Activated CD8-positive, alpha-beta T cell treated with anti-CD3 and anti-CD28 coated beads, Interleukin-2, amount 10 ng/mL, durations not matched to agents 7 days and 5 days (primary cell): ENCODE measurements at regions of chr14 and their contacts with region 1.

Region 1: GRCh38 chr14:22986508-22987054 is 4.2 kb upstream of the AJUBA start:
- DNase-seq: peak; percentile 93
- ATAC-seq: peak; percentile 50
- H3K4me3 Mint-ChIP-seq: no peak overlapping the region
- H3K27ac Mint-ChIP-seq: no peak overlapping the region
- H3K4me1 Mint-ChIP-seq: no peaks in the 10 kb centered on the region
- H3K27me3 Mint-ChIP-seq: no peaks in the 10 kb centered on the region

Region 2: DNA sequence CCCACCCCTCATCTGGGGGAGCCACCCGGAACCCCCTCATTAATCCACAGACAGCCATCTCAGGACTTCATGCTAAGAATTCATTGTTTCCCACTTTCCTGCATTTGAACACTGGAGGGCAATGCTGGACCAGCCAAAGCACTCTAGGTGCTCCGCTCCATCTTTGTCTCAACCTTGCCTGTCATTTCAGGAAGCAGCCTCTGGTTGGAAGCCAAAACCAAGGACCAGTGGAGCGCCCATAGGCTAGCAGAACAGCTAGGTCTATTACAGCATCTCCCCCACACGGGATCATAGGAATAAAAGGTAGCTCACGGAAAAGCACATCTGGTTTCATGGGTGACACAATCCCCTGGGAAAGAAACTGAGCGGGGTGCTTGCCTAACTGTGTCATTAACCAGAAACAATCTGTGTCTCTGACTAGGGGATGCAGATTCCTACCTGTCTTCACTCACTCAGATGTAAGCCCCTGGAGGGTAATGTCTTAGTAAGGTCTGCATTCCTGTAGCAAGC is 594.6 kb before region 1 on chr14:
- CTCF ChIA-PET with region 1: no interaction called
- POLR2A ChIA-PET with region 1: no interaction called
- DNase-seq: no peak
- ATAC-seq: no peak
- H3K4me3 Mint-ChIP-seq: no peak overlapping the region
- H3K27ac Mint-ChIP-seq: no peak overlapping the region
- H3K4me1 Mint-ChIP-seq: no peaks in the 10 kb centered on the region
- H3K27me3 Mint-ChIP-seq: no peaks in the 10 kb centered on the region

Region 3: GRCh38 chr14:22766456-22767322 is 219.9 kb before region 1 on chr14 and contains the start of gene OXA1L:
- CTCF ChIA-PET with region 1: no interaction called
- POLR2A ChIA-PET with region 1: no interaction called
- DNase-seq: peak; percentile 98
- ATAC-seq: peak; percentile 94
- H3K4me3 Mint-ChIP-seq: peak within 1 kb of the TSS; percentile 93
- H3K27ac Mint-ChIP-seq: peak within 1 kb of the TSS; percentile 97
- H3K4me1 Mint-ChIP-seq: peaks cover 33% of the 10 kb centered on the region
- H3K27me3 Mint-ChIP-seq: no peaks in the 10 kb centered on the region
- total RNA-seq, gene OXA1L: 104 to 107 TPM

Region 4: DNA sequence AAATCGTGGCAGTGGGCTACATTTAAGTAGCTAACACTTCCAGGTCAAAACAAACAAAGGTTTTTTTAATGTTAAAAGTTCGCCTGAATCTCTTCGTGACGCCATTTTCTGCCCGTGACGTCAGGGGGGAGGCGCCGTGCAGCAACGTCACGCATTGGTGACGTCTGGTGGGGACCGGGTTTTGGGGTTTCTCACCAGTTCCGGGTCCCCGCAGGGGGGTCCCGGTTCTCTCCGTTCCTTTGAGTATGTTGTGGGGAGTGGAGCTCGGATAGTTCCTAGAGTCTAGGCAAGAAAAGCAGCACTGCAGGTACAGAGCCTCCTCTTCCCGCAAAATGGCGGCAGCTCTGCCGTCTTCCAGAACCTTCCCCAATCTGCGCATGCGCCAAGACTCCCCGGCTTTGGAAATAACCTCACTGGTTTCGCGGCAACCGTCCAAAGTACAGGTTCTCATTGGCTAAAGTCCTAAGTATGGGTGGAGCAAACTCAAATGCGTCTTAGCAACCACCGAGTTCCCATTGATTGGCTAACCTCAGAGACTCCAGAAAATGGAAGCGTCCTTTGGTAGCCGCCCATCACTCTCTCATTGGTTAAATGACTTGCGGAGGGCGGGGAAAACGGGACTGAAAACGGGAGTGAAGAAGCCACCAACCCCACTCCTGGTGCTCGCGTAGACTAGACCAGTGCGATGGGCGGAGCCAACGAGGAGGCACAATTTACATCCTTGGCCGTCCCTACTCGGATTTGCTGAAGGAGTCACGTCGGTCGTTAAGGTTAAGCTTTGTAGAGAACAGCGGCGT is 67.6 kb before region 1 on chr14 and contains the start of gene RBM23:
- CTCF ChIA-PET with region 1: interaction called, 15 read pairs
- POLR2A ChIA-PET with region 1: no interaction called
- DNase-seq: peak; percentile 100
- ATAC-seq: peak; percentile 96
- H3K4me3 Mint-ChIP-seq: peak within 1 kb of the TSS; percentile 88
- H3K27ac Mint-ChIP-seq: peak within 1 kb of the TSS; percentile 98
- H3K4me1 Mint-ChIP-seq: peaks cover 35% of the 10 kb centered on the region
- H3K27me3 Mint-ChIP-seq: no peaks in the 10 kb centered on the region
- total RNA-seq, gene RBM23: 77.1 to 81.2 TPM

Region 5: DNA sequence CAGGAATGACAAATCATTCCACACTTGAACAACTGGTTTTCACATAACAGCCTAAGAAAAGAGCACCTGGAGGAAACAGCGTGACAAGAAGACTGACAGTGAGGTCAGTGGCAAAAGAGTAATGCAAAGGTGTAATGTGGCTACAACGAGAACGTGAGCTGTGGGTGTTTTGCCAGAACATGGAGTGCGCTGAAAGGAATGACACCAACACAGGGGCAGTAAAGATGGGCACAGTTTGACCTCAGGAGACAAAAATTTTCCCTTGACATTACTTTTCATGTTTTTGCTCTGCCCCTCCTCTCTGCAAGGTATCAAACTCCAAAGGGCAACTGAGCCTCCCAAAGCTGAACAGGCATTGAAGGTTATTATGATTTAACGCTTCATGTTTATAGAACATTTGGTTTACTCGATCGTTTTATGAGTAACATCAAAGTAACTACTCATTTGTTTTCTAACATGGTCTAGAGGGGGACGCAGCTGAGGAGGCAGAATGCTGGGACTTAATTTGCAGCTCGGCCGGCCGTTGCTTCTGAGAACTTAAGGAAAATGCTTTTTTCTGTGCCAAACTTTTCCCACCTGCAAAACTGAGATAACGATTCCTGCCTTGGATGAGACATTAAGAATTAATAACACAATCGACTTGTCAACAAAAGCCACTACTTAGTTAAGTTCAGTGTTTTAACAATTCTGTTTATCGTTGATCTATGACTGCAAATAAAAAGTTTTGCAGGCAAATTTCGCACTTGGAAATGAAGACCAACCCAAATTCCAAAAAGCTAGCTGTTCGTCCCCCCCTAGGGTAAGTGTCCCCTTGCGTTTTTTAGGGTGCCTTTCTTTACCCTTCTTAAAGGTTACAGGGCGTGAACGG is 30.6 kb before region 1 on chr14:
- CTCF ChIA-PET with region 1: interaction called, 97 read pairs
- POLR2A ChIA-PET with region 1: interaction called, 3 read pairs
- DNase-seq: no peak
- ATAC-seq: no peak
- H3K4me3 Mint-ChIP-seq: peak overlapping the region; percentile 95
- H3K27ac Mint-ChIP-seq: peak overlapping the region; percentile 92
- H3K4me1 Mint-ChIP-seq: peaks cover 29% of the 10 kb centered on the region
- H3K27me3 Mint-ChIP-seq: no peaks in the 10 kb centered on the region

Region 6: DNA sequence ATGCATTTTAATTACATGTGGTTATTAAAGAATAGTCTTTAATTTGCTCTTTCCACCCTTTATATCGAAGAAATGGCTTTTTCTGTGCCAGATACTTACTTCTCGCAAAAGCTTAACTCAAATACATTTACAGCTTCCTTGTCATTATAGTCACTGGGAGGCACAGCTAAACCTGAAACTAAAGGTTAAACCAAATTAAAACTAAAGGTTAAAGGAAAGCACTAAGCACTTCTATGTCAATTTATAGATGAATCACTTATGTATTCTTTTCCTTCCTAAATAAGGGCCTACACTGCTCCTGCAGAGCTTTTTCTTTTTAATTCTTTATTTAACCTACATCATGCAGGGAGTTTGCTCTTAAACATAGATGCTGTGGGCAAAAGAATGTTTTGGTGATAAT is 14.3 kb after region 1 on chr14:
- CTCF ChIA-PET with region 1: interaction called, 121 read pairs
- POLR2A ChIA-PET with region 1: interaction called, 3 read pairs
- DNase-seq: no peak
- ATAC-seq: no peak
- H3K4me3 Mint-ChIP-seq: no peak overlapping the region
- H3K27ac Mint-ChIP-seq: no peak overlapping the region
- H3K4me1 Mint-ChIP-seq: peaks cover 7% of the 10 kb centered on the region
- H3K27me3 Mint-ChIP-seq: no peaks in the 10 kb centered on the region

Region 7: GRCh38 chr14:23034483-23035302 is 48.1 kb after region 1 on chr14 and contains the start of gene PSMB5:
- CTCF ChIA-PET with region 1: interaction called, 10 read pairs
- POLR2A ChIA-PET with region 1: no interaction called
- DNase-seq: peak; percentile 95
- ATAC-seq: peak; percentile 97
- H3K4me3 Mint-ChIP-seq: peak within 1 kb of the TSS; percentile 91
- H3K27ac Mint-ChIP-seq: peak within 1 kb of the TSS; percentile 96
- H3K4me1 Mint-ChIP-seq: peaks cover 30% of the 10 kb centered on the region
- H3K27me3 Mint-ChIP-seq: no peaks in the 10 kb centered on the region
- total RNA-seq, gene PSMB5: 64.5 to 74.5 TPM

Region 8: GRCh38 chr14:23076785-23077408 is 90.3 kb after region 1 on chr14:
- CTCF ChIA-PET with region 1: interaction called, 35 read pairs
- POLR2A ChIA-PET with region 1: no interaction called
- DNase-seq: peak; percentile 56
- ATAC-seq: peak; percentile 63
- H3K4me3 Mint-ChIP-seq: no peak overlapping the region
- H3K27ac Mint-ChIP-seq: no peak overlapping the region
- H3K4me1 Mint-ChIP-seq: peaks cover 5% of the 10 kb centered on the region
- H3K27me3 Mint-ChIP-seq: no peaks in the 10 kb centered on the region

Region 9: DNA sequence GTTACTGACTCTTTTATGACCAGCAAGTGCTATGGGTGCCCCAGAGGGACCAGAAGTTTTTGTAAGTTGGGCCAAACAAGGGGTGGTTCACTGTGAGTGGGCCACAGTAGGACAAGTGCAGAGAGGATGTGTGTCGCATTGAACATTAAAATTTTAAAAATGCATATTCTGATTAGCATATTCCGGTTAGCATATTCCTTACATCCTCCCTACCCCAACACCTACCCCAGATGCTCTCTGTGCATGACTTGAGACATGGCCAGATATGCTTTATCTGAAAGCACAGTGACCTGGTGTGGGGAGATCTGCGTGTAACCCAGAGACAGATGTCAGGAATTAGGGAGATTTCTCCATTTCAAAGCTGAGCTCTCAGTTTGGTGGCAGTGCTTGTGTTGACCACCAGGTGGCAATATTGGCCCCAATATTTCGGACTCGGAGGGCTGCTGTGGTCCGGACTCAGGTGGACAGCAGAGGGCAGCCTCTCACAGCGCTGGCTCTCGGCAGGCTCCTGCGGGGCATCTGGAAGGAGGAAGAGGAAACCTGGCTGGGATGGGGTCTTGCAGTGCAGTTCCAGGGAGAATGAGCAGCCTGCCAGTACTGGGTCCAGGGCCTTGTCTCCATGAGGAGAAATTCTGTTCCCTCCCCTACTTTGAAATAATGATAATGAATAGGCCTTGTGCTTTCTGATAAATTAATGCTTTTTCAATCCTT is 134.1 kb after region 1 on chr14:
- CTCF ChIA-PET with region 1: interaction called, 10 read pairs
- POLR2A ChIA-PET with region 1: no interaction called
- DNase-seq: peak; percentile 90
- ATAC-seq: peak; percentile 82
- H3K4me3 Mint-ChIP-seq: peak overlapping the region; percentile 48
- H3K27ac Mint-ChIP-seq: peak overlapping the region; percentile 88
- H3K4me1 Mint-ChIP-seq: peaks cover 41% of the 10 kb centered on the region
- H3K27me3 Mint-ChIP-seq: no peaks in the 10 kb centered on the region